Tibial artery (tissue), 4 donors: ENCODE measurements at regions of chr6 and their contacts with region 1.

Region 1: GRCh38 chr6:79233611-79234149 is 802 bp downstream of the HMGN3 start:
- DNase-seq: peak; percentile 92 to 95
- H3K4me3 ChIP-seq: peak overlapping the region; percentile 64 to 72
- H3K27ac ChIP-seq: peak overlapping the region; percentile 85 to 86
- H3K4me1 ChIP-seq: peaks cover 0 to 25% (median 4%) of the 10 kb centered on the region in 4 donors
- H3K27me3 ChIP-seq: no peaks in the 10 kb centered on the region
- CTCF ChIP-seq: peak; percentile 38 to 47

Region 2: GRCh38 chr6:79078075-79079025 is 155.3 kb before region 1 on chr6 and contains the start of gene PHIP:
- intact Hi-C with region 1: loop called (anchors 5 kb)
- DNase-seq: peak; percentile 94 to 97
- H3K4me3 ChIP-seq: peak within 1 kb of the TSS; percentile 98
- H3K27ac ChIP-seq: peak within 1 kb of the TSS; percentile 98 to 99
- H3K4me1 ChIP-seq: peaks cover 0 to 42% (median 8%) of the 10 kb centered on the region in 4 donors
- H3K27me3 ChIP-seq: no peaks in the 10 kb centered on the region
- CTCF ChIP-seq: no peak

Region 3: GRCh38 chr6:79335133-79335674 is 101.5 kb after region 1 on chr6:
- intact Hi-C with region 1: no loop called
- DNase-seq: no peak
- H3K4me3 ChIP-seq: no peak overlapping the region
- H3K27ac ChIP-seq: no peak overlapping the region
- H3K4me1 ChIP-seq: no peaks in the 10 kb centered on the region
- H3K27me3 ChIP-seq: no peaks in the 10 kb centered on the region
- CTCF ChIP-seq: no peak